ENCODE measurements at regions of chr3 and their contacts with region 1.

Region 1: DNA sequence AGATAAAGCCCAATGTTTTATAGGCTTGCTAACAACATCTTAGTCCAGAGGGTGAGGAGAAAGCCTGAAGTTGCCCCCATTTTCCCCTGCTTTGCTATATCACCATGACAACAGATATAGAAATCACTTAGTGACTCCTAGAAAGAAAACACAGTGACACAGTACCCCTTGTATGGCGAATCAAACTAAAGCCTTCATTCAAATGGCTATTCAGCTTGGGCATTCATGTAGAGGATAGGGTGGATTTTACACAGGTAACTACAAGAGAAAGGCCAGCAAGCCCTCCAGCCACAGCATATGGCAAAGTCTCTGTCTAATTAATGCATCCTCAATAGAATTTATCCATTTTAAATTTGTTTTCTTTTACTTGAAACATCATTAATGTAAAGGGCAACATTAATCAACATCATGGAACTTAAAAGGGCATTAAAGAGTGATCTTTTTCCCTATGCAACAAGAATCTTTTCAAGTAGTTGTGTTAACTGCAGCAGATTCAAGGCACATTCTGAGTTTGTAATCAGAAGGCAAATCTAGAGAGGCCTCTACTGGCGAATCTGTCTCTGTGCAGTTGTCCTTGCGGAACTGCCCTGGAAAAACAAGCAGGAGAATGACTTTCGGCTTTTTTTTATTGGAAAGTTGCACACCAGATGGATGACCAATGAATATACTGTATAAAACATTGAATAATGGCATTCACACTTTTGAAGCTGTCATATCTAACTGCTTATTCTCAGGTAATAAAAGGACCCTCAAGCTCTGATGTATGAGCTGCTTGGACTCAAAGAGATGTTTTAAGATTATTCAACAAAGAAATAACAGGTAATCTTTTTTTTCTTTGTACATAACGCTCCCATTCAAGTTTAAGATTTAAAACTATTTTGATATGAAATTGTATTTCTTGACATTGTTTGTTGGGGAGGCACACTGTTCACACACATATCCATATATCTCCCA is 621.7 kb upstream of the AGTR1 start:
- DNase-seq: peak; percentile 71
- H3K4me3 ChIP-seq: no peak overlapping the region
- H3K27ac ChIP-seq: no peak overlapping the region
- H3K4me1 ChIP-seq: no peaks in the 10 kb centered on the region
- H3K27me3 ChIP-seq: no peaks in the 10 kb centered on the region
- CTCF ChIP-seq: peak; percentile 67 to 78
- POLR2A ChIP-seq: no peak

Region 2: DNA sequence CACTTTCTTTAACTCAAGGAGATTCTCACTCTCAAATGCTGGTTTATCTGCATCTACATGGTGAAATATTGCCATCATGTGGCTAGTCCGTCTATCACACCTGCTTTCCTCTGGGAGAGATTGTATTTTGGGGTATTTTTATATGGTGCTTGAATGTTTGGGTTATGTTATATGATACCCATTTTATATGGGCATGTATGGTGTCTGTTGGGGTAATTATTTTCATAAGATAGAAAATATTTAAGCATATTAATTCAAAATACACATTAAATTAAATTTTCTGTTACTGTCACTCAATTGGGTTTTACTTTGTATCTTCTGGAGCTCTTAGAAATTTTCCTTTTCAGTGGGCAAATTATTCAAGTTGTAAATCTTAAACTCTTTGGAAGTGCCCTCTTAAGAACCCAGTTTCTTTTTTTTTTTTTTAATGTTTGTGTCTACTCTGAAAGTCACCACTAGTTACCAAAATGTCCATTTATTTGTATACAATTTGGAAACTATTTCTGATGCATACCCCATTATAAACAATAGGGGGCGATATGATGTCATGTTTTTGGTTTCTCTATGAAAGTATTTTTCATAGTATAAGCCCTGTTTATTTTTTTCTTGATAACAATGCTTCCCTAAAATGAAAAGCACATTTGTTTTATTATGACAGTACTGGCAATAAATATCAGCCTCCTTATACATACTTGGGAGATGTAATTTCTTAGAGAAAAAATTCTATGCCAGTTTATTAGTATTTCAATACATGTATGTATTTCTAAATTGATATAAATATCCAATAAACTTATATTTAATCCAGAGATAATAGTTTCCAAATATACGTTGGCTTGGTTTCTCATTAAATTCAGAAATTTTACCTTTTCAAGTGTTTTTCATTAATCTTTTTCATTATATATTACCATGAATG is 1434.8 kb before region 1 on chr3:
- CTCF ChIA-PET with region 1: no interaction called
- POLR2A ChIA-PET with region 1: no interaction called
- dilution Hi-C with region 1: no loop called
- intact Hi-C with region 1: loop called (anchors 1 kb)
- DNase-seq: peak; percentile 69
- H3K4me3 ChIP-seq: no peak overlapping the region
- H3K27ac ChIP-seq: no peak overlapping the region
- H3K4me1 ChIP-seq: no peaks in the 10 kb centered on the region
- H3K27me3 ChIP-seq: no peaks in the 10 kb centered on the region
- CTCF ChIP-seq: peak; percentile 38
- POLR2A ChIP-seq: no peak

Region 3: DNA sequence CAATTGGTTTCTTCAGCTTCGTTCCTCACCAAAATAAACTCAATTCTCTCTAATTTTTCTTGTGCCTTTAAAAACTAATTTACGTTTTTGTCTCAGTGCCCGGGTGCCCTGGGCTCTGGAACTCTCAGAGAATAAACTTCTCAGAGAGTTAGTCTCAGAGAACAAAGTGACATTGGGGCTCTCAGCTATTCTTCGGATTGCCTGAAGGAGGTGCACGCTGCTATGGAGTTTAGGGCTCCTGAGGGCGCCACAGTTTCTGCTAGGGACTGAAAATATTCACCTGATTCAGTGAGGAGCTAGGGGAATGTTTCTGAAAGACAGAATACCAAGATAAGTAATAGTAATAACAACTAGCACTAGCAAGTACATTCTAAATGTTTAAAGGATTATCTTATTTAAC is 692.4 kb before region 1 on chr3:
- CTCF ChIA-PET with region 1: interaction called, 32 read pairs
- POLR2A ChIA-PET with region 1: no interaction called
- dilution Hi-C with region 1: no loop called
- intact Hi-C with region 1: loop called (anchors 1 kb)
- DNase-seq: no peak
- H3K4me3 ChIP-seq: no peak overlapping the region
- H3K27ac ChIP-seq: no peak overlapping the region
- H3K4me1 ChIP-seq: no peaks in the 10 kb centered on the region
- H3K27me3 ChIP-seq: peaks cover 90 to 99% of the 10 kb centered on the region in 2 experiments
- CTCF ChIP-seq: peak; percentile 27 to 38
- POLR2A ChIP-seq: no peak

Region 4: GRCh38 chr3:147418808-147419701 is 657.0 kb before region 1 on chr3:
- CTCF ChIA-PET with region 1: interaction called, 20 read pairs
- POLR2A ChIA-PET with region 1: no interaction called
- dilution Hi-C with region 1: no loop called
- intact Hi-C with region 1: no loop called
- DNase-seq: no peak
- H3K4me3 ChIP-seq: no peak overlapping the region
- H3K27ac ChIP-seq: no peak overlapping the region
- H3K4me1 ChIP-seq: peaks cover 4% of the 10 kb centered on the region
- H3K27me3 ChIP-seq: peaks cover 91 to 100% of the 10 kb centered on the region in 2 experiments
- CTCF ChIP-seq: no peak
- POLR2A ChIP-seq: no peak

Region 5: GRCh38 chr3:147816770-147817169 is 259.3 kb before region 1 on chr3:
- CTCF ChIA-PET with region 1: interaction called, 10 read pairs
- POLR2A ChIA-PET with region 1: no interaction called
- dilution Hi-C with region 1: no loop called
- intact Hi-C with region 1: loop called (anchors 5 kb)
- DNase-seq: peak; percentile 91
- H3K4me3 ChIP-seq: no peak overlapping the region
- H3K27ac ChIP-seq: peak overlapping the region; percentile 28
- H3K4me1 ChIP-seq: peaks cover 25% of the 10 kb centered on the region
- H3K27me3 ChIP-seq: no peaks in the 10 kb centered on the region
- CTCF ChIP-seq: no peak
- POLR2A ChIP-seq: no peak

Region 6: GRCh38 chr3:147864754-147865354 is 211.2 kb before region 1 on chr3:
- CTCF ChIA-PET with region 1: no interaction called
- POLR2A ChIA-PET with region 1: no interaction called
- dilution Hi-C with region 1: no loop called
- intact Hi-C with region 1: no loop called
- DNase-seq: no peak
- H3K4me3 ChIP-seq: no peak overlapping the region
- H3K27ac ChIP-seq: no peak overlapping the region
- H3K4me1 ChIP-seq: no peaks in the 10 kb centered on the region
- H3K27me3 ChIP-seq: no peaks in the 10 kb centered on the region
- CTCF ChIP-seq: no peak
- POLR2A ChIP-seq: no peak

Region 7: DNA sequence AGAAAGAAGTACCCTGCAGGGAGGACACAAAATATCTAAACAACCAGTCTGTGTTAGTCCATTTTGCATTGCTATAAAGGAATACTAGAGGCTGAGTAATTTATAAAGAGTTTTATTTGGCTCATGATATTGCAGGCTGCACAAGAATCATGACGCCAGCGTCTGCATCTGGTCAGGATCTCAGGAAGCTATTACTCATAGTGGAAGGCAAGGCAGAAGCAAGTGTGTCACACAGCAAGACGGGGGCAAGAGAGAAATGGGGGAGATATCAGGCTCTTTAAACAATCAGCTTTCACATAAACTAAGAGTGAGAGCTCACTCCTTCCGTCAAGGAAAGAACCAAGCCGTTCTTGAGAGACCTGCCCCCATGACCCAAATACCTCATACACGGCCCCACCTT is 52.0 kb before region 1 on chr3:
- CTCF ChIA-PET with region 1: interaction called, 11 read pairs
- POLR2A ChIA-PET with region 1: no interaction called
- dilution Hi-C with region 1: no loop called
- intact Hi-C with region 1: no loop called
- DNase-seq: peak; percentile 92
- H3K4me3 ChIP-seq: no peak overlapping the region
- H3K27ac ChIP-seq: peak overlapping the region; percentile 80
- H3K4me1 ChIP-seq: peaks cover 17% of the 10 kb centered on the region
- H3K27me3 ChIP-seq: no peaks in the 10 kb centered on the region
- CTCF ChIP-seq: no peak
- POLR2A ChIP-seq: no peak

Region 8: GRCh38 chr3:148943506-148944205 is 867.6 kb after region 1 on chr3:
- CTCF ChIA-PET with region 1: no interaction called
- POLR2A ChIA-PET with region 1: no interaction called
- dilution Hi-C with region 1: no loop called
- intact Hi-C with region 1: loop called (anchors 5 kb)
- DNase-seq: peak; percentile 89
- H3K4me3 ChIP-seq: no peak overlapping the region
- H3K27ac ChIP-seq: no peak overlapping the region
- H3K4me1 ChIP-seq: no peaks in the 10 kb centered on the region
- H3K27me3 ChIP-seq: peaks cover 3 to 14% of the 10 kb centered on the region in 2 experiments
- CTCF ChIP-seq: peak; percentile 52 to 60
- POLR2A ChIP-seq: no peak

Measured in endothelial cell of umbilical vein (primary cell).